Prostate gland (tissue), 2 donors: ENCODE measurements at regions of chr2 and their contacts with region 1.

Region 1: DNA sequence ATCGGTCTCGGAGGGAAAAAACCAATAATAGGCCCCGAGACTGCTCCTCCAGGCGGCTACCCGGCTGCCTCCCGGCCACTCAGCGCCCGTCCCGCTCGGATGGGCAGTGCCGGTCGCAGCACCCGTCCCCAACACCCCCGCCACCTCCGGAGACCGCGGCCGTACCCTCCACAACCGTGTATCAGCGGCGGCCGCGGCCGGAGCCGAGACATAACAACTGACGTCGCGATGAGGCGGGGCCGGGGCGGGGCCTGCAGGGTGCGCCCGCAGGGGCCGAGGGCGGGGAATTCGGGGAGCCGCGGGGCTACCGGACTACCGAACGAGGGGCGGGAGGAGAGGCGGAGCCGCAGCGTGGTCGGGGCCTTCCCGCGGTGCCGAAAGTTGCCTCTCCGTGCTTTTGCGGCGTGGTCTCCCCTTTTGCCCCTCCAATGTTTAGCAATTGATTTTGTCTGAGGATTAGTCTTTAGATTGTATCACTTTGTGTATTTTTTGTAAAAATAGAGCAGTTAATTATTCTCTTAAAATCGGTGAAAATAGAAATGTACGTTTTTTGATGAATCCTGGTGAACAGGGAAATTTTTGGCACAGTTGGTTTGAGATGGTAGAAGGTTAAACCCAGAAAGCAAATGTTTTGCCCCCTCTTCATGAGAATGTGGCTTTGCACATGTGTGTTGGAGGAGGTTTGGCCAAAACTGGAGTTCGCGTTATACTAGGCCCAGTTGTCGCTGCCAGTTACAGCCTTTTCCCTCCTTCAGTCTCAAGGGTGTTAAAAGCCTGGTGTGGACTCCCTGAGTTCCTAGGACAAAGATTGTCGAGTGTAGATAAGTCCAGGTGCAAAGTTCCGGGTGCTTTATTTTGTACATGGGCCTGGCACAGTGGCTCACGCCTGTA is at the start of gene RNF103:
- DNase-seq: peak; percentile 97
- H3K4me3 ChIP-seq: peak within 1 kb of the TSS; percentile 76 to 84
- H3K27ac ChIP-seq: peak within 1 kb of the TSS; percentile 98 to 99
- H3K4me1 ChIP-seq: no peaks in the 10 kb centered on the region
- H3K27me3 ChIP-seq: no peaks in the 10 kb centered on the region
- CTCF ChIP-seq: peak in 2 of 4 experiments; percentile 8 to 28
- POLR2A ChIP-seq: peak; percentile 100
- total RNA-seq, gene RNF103: 40.8 to 41.9 TPM

Region 2: DNA sequence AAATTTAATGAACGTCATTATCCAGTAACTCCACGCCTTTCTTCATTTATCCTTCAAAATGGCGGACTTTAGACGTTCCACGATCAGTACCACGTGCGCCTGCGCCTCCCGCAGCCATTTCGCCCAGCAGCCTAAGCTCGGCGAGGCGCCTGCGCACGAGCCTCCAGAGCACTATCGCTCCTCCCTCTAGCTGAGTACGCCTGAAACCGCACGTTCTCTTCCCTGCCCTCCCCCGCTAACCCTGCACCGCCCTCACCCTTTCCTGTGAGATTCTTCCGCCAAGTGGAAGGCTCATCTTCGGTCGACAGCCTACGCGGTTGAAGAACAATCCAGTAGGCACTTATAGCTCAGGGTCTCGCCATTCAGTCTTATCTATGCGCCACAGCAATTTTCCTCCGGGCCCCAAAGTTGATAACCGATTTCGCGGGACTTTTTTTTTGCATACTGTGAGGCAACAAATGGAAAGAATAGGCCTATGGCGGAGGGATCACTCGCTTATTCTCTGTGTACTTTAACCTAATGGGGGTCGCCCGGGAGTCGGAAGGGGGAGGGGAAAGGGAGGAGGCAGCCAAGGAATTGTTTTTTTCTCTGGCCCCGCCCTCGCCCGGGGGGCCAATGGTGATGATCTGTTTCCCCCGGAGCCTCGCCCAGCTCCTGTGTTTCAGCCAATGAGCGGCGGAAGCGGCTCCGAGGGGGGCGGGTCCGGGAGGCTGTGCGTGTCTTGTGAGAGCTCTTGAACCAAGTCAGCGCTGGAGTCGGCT is 183.1 kb before region 1 on chr2 and contains the start of gene KDM3A:
- intact Hi-C with region 1: loop called (anchors 2 kb)
- DNase-seq: peak; percentile 99
- H3K4me3 ChIP-seq: peak within 1 kb of the TSS; percentile 76 to 88
- H3K27ac ChIP-seq: peak within 1 kb of the TSS; percentile 96 to 99
- H3K4me1 ChIP-seq: peaks cover 7% of the 10 kb centered on the region
- H3K27me3 ChIP-seq: no peaks in the 10 kb centered on the region
- CTCF ChIP-seq: peak in 1 of 4 experiments; percentile 22
- POLR2A ChIP-seq: no peak
- total RNA-seq, gene KDM3A: 24.6 to 56.6 TPM

Region 3: DNA sequence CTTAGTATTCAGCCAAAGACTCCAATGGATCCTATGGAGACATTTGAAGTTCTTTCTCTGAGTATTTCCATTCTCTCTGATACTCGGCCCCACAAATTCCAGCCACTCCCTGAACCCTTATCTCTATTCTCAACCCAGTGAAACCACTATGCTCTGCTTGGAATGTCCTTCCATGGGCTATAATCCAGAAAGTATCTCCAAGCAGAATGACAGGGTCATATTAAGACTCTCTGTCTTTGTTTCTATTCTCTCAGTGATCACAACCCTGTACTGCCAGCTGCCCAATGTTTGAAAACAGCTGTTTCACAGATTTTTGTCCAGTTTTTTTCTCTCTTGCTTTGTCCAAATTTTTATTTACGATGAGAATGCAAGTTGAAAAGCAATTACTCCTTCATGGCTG is 82.6 kb before region 1 on chr2:
- intact Hi-C with region 1: no loop called
- DNase-seq: no peak
- H3K4me3 ChIP-seq: no peak overlapping the region
- H3K27ac ChIP-seq: no peak overlapping the region
- H3K4me1 ChIP-seq: no peaks in the 10 kb centered on the region
- H3K27me3 ChIP-seq: no peaks in the 10 kb centered on the region
- CTCF ChIP-seq: no peak
- POLR2A ChIP-seq: no peak

Region 4: DNA sequence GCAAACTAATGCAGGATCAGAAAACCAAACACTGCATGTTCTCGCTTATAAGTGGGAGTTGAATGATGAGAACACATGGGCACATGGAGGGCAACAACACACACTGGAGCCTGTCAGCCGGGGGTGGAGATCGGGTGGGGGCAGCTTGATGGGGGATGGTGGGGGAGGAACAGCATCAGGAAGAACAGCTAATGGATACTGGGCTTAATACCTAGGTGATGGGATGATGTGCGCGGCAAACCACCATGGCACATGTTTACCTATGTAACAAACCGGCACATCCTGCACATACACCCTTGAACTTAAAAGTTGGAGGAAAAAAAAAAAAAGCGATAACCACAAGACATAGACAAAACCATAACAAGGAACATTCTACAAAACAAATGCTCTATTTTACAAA is 71.0 kb before region 1 on chr2:
- intact Hi-C with region 1: no loop called
- DNase-seq: no peak
- H3K4me3 ChIP-seq: no peak overlapping the region
- H3K27ac ChIP-seq: no peak overlapping the region
- H3K4me1 ChIP-seq: no peaks in the 10 kb centered on the region
- H3K27me3 ChIP-seq: no peaks in the 10 kb centered on the region
- CTCF ChIP-seq: no peak
- POLR2A ChIP-seq: no peak

Region 5: GRCh38 chr2:86562922-86563649 is 60.8 kb before region 1 on chr2 and contains the start of gene CHMP3:
- intact Hi-C with region 1: loop called (anchors 1 kb)
- DNase-seq: peak; percentile 94
- H3K4me3 ChIP-seq: peak within 1 kb of the TSS; percentile 68 to 83
- H3K27ac ChIP-seq: peak within 1 kb of the TSS; percentile 98 to 100
- H3K4me1 ChIP-seq: no peaks in the 10 kb centered on the region
- H3K27me3 ChIP-seq: no peaks in the 10 kb centered on the region
- CTCF ChIP-seq: no peak
- POLR2A ChIP-seq: peak; percentile 54
- total RNA-seq, gene CHMP3: 109 to 126 TPM

Region 6: GRCh38 chr2:86577817-86578456 is 46.0 kb before region 1 on chr2:
- intact Hi-C with region 1: no loop called
- DNase-seq: no peak
- H3K4me3 ChIP-seq: no peak overlapping the region
- H3K27ac ChIP-seq: no peak overlapping the region
- H3K4me1 ChIP-seq: no peaks in the 10 kb centered on the region
- H3K27me3 ChIP-seq: no peaks in the 10 kb centered on the region
- CTCF ChIP-seq: no peak
- POLR2A ChIP-seq: no peak

Region 7: GRCh38 chr2:86704459-86704971 is 80.6 kb after region 1 on chr2:
- intact Hi-C with region 1: loop called (anchors 10 kb)
- DNase-seq: peak; percentile 19
- H3K4me3 ChIP-seq: no peak overlapping the region
- H3K27ac ChIP-seq: peak overlapping the region; percentile 48 to 58
- H3K4me1 ChIP-seq: no peaks in the 10 kb centered on the region
- H3K27me3 ChIP-seq: no peaks in the 10 kb centered on the region
- CTCF ChIP-seq: no peak
- POLR2A ChIP-seq: no peak

Region 8: DNA sequence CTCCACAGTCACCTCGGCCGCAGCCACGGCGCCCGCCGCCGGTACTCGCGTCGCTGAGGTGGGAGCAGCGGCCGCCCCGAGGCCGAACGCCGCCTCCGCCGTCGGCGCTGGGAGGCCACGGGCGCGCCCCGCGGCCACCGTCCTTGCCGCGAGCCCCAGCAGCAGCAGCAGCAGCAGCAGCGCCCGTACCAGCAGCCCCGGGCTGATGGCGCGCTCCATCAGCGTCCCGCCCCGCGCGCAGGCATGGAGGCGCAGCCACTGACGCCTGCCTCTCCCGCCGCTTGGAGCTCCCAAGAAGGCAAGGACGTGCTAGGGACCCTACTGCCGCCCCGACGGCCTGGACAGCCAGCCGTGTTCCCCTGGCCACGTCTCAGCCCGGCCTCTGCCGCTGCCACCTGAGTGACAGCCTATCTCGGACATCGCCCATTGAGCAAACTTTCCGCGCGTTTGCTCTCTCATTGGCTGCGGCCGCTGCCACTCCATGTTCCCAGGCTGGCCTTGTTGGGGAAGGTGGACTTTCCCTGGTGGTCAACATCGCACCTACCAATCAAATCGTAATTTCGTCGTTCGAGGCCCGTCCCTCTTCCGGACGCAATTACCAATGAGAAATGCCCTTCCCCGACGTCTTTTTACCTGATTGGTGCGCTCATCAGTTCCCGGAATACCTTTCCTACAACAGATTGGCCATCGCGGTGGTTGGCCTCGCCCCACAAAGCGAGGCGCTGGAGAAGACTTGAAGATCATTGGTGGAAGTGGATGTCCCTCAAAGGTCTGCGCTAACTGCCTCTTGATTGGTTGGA is 2003.4 kb after region 1 on chr2 and contains the start of gene EIF2AK3:
- intact Hi-C with region 1: loop called (anchors 10 kb)
- DNase-seq: peak; percentile 100
- H3K4me3 ChIP-seq: peak within 1 kb of the TSS; percentile 93
- H3K27ac ChIP-seq: peak within 1 kb of the TSS; percentile 95 to 97
- H3K4me1 ChIP-seq: peaks cover 4% of the 10 kb centered on the region
- H3K27me3 ChIP-seq: no peaks in the 10 kb centered on the region
- CTCF ChIP-seq: peak in 3 of 4 experiments; percentile 12 to 78 (median 46)
- POLR2A ChIP-seq: peak; percentile 100
- total RNA-seq, gene EIF2AK3: 21.4 to 39.1 TPM